ENCODE measurements at regions of chr6 and their contacts with region 1.

Region 1: GRCh38 chr6:18503593-18504231 is 116.6 kb downstream of the RNF144B start:
- DNase-seq: no peak
- ATAC-seq: peak; percentile 88
- H3K4me3 Mint-ChIP-seq: peak overlapping the region; percentile 73
- H3K27ac Mint-ChIP-seq: no peak overlapping the region
- H3K4me1 Mint-ChIP-seq: peaks cover 14% of the 10 kb centered on the region
- H3K27me3 Mint-ChIP-seq: no peaks in the 10 kb centered on the region
- CTCF ChIP-seq: peak; percentile 79

Region 2: DNA sequence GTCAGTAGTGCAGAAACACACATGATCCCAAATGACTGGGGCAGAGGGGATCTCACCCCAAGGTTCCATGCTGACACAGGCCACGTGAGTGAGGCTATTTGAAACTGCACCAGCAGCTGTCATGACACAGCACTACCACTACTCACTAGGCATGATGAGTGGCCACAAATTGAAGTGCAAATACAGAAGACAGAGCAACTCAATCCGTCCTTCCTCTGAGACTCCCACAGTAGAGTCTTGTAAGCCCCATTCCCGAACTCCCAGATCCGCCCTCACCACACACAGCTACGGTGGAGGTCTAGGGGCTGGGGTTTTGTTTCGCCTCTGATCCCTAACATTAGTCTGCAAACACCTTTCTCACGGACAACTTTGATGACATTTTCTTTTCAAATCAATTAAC is 683.7 kb before region 1 on chr6:
- CTCF ChIA-PET with region 1: interaction called, 3 read pairs
- POLR2A ChIA-PET with region 1: no interaction called
- intact Hi-C with region 1: loop called (anchors 5 kb)
- DNase-seq: no peak
- ATAC-seq: no peak
- H3K4me3 Mint-ChIP-seq: no peak overlapping the region
- H3K27ac Mint-ChIP-seq: no peak overlapping the region
- H3K4me1 Mint-ChIP-seq: no peaks in the 10 kb centered on the region
- H3K27me3 Mint-ChIP-seq: no peaks in the 10 kb centered on the region
- CTCF ChIP-seq: no peak

Region 3: DNA sequence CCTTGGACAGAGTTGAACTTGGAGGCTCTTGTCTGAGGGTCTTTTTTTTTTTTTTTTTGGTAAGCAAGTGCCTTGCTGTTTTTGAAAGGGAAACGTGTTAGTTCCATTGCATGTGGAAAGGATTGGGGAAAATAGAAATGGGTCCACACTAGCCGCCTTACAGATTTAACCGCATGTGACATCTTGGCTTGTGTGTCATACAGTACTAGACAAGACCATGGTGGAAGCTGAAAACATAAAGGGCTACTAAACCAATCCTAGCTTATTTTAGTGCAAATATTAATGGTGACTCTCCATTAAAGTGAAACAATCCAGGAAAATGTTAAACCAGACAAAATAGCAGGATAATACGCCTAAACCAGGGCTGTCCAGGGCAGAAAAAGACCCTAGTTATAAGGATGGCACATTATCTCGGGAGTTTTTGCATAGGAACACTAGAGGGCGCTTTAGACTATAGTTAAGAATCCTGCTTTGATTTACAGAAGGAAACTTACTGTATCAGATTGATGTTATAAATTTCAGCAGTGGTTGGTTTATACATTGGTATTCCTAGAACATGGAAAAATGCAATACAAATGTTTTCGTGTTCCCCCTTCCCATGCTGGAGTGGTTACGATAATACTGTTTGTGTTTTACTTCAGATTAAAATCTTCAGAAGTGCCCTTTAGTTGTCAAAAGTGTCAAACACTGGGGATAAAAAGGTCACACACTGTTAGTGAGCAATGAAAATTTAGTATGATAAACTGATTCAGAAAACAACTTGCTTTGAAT is 179.6 kb before region 1 on chr6:
- CTCF ChIA-PET with region 1: interaction called, 155 read pairs
- POLR2A ChIA-PET with region 1: interaction called, 7 read pairs
- intact Hi-C with region 1: loop called (anchors 1 kb)
- DNase-seq: no peak
- ATAC-seq: peak; percentile 62
- H3K4me3 Mint-ChIP-seq: no peak overlapping the region
- H3K27ac Mint-ChIP-seq: no peak overlapping the region
- H3K4me1 Mint-ChIP-seq: peaks cover 34% of the 10 kb centered on the region
- H3K27me3 Mint-ChIP-seq: no peaks in the 10 kb centered on the region
- CTCF ChIP-seq: peak; percentile 44

Region 4: GRCh38 chr6:18330548-18331081 is 173.1 kb before region 1 on chr6:
- CTCF ChIA-PET with region 1: interaction called, 155 read pairs
- POLR2A ChIA-PET with region 1: interaction called, 10 read pairs
- intact Hi-C with region 1: no loop called
- DNase-seq: peak; percentile 24
- ATAC-seq: peak; percentile 62
- H3K4me3 Mint-ChIP-seq: peak overlapping the region; percentile 29
- H3K27ac Mint-ChIP-seq: peak overlapping the region; percentile 84
- H3K4me1 Mint-ChIP-seq: peaks cover 53% of the 10 kb centered on the region
- H3K27me3 Mint-ChIP-seq: no peaks in the 10 kb centered on the region
- CTCF ChIP-seq: no peak

Region 5: DNA sequence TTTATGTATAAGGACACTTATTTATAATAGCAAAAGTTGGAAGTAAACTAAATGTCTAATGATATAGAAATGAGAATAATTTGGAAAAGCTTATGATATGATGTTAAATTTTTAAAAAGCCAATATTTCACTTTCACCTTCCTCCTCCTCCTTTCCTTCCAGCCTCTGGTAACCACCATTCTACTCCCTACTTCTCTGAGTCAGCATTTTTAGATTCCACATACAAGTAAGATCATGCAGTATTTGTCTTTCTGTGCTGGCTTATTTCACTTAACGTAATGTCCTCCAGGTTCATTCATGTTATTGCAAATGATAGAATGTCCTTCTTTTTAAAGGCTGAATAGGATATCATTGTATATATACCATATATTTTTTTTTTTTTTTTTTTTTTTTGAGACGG is 63.7 kb after region 1 on chr6:
- CTCF ChIA-PET with region 1: no interaction called
- POLR2A ChIA-PET with region 1: no interaction called
- intact Hi-C with region 1: no loop called
- DNase-seq: no peak
- ATAC-seq: no peak
- H3K4me3 Mint-ChIP-seq: no peak overlapping the region
- H3K27ac Mint-ChIP-seq: no peak overlapping the region
- H3K4me1 Mint-ChIP-seq: no peaks in the 10 kb centered on the region
- H3K27me3 Mint-ChIP-seq: peaks cover 3% of the 10 kb centered on the region
- CTCF ChIP-seq: no peak

Region 6: DNA sequence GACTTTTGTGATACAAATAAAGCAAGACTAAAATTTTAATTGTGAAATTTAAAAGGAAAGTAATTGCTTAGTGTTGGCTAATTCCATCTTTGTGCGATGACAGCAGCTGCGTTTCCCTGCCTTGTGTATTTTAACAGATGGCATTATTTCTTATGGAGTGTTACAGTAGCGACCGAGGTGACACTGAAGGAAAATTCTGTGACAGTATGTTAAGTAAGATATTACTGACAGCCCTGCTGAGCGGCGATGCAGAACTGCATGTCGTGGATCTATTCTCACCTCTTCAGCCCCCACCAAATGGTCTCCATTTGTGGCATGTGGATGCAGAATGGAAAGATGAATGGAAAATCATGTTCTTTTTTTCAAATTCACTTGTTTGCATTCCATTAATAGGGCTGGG is 172.8 kb after region 1 on chr6:
- CTCF ChIA-PET with region 1: no interaction called
- POLR2A ChIA-PET with region 1: no interaction called
- intact Hi-C with region 1: no loop called
- DNase-seq: no peak
- ATAC-seq: no peak
- H3K4me3 Mint-ChIP-seq: no peak overlapping the region
- H3K27ac Mint-ChIP-seq: no peak overlapping the region
- H3K4me1 Mint-ChIP-seq: no peaks in the 10 kb centered on the region
- H3K27me3 Mint-ChIP-seq: no peaks in the 10 kb centered on the region
- CTCF ChIP-seq: no peak

Region 7: GRCh38 chr6:19013026-19013705 is 509.5 kb after region 1 on chr6:
- CTCF ChIA-PET with region 1: no interaction called
- POLR2A ChIA-PET with region 1: no interaction called
- intact Hi-C with region 1: no loop called
- DNase-seq: no peak
- ATAC-seq: no peak
- H3K4me3 Mint-ChIP-seq: no peak overlapping the region
- H3K27ac Mint-ChIP-seq: no peak overlapping the region
- H3K4me1 Mint-ChIP-seq: no peaks in the 10 kb centered on the region
- H3K27me3 Mint-ChIP-seq: no peaks in the 10 kb centered on the region
- CTCF ChIP-seq: no peak

Measured in activated B cell treated with CpG ODN at 0.5 μM for 24 hours (primary cell).